ENCODE measurements at regions of chr19 and their contacts with region 1.

Region 1: GRCh38 chr19:39110263-39110967 is 15.2 kb upstream of the PAK4 start:
- H3K4me3 ChIP-seq: no peak overlapping the region
- H3K27ac ChIP-seq: no peak overlapping the region
- H3K4me1 ChIP-seq: peaks cover 7% of the 10 kb centered on the region; the same call in 1 of the 2 replicates
- CTCF ChIP-seq: peak; percentile 97

Region 2: DNA sequence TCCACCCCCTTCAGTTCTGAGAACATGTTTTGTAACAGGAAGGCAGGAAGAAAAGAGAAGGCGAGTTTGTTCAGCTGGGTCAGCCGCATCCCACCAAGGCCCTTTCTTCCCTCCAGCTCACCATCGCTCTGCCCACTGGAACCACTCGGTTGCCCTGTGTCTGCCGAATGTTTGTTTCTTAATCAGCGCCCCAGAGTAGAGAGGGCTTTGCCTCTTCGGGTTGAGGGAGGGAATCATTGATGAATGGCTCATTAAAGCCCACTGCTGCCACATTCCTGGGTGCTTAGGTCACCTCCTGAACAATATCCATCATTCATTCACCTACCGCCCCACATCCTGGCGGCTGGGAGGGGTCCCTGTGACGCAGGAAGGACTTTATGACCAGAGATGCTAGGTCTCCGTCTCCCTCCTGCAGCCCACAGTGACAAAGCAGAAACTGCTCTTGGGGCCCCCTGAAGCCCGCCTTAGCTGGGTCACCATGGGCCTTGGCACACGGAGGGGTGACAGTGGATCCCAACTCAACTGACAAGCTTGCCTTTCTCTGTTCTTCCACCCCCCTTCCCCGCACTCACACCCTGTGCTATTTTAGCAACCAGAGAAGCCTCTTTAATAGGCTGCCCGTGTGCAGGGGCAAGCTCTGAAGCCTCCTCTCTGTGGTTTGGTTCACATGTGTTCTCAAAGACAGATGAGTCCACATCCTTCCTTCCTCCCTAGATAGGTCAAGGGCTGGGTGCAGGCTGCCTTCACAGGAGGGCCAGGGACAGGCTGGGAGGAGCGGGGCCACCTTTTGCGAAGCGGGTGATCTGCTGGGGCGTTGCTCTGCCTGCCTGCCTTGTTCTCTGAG is 416.8 kb before region 1 on chr19:
- CTCF ChIA-PET with region 1: no interaction called
- POLR2A ChIA-PET with region 1: no interaction called
- H3K4me3 ChIP-seq: no peak overlapping the region
- H3K27ac ChIP-seq: no peak overlapping the region
- H3K4me1 ChIP-seq: peaks cover 6% of the 10 kb centered on the region; the same call in 1 of the 2 replicates
- CTCF ChIP-seq: no peak

Region 3: GRCh38 chr19:39052243-39052746 is 58.1 kb before region 1 on chr19:
- CTCF ChIA-PET with region 1: interaction called, 40 read pairs
- POLR2A ChIA-PET with region 1: no interaction called
- H3K4me3 ChIP-seq: no peak overlapping the region
- H3K27ac ChIP-seq: no peak overlapping the region
- H3K4me1 ChIP-seq: no peaks in the 10 kb centered on the region
- CTCF ChIP-seq: peak; percentile 98

Region 4: DNA sequence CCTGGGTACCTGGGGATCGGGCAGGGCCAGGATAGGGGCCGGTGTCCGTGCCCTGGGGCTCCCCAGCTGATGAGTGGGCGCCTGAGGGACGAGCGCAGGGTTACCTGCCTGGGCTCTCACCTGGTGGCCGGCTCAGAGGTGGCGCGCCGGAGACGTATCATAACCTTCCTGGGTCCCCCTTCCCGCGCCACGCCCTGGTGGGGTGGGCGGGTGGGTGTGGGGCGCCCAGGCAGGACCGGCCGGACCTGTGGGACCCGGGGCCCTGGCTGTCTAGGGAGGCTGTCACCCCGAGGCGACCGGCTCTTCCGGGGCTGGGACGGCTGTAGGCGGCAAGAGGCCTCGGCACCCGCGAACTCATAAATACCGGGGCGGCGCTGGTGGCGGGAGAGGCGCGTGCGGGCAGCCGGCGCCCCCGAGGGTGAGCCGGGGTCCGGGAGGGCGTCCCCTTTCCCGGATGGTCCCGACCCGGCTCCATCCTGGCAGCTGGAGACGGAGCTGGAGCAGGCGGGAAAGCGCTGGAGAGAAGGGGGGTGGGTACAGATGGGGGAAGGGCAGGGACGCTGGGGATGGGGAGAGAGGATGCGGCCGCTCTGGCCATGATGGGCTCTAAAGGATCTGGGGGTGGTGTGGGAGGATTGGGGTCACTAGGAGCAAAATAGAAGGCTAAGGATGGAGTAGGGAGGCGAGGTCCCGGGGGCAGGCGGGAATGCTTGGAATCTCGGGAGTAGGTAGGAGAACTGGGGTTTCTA is 26.3 kb before region 1 on chr19 and contains the start of gene ACP7:
- CTCF ChIA-PET with region 1: interaction called, 20 read pairs
- POLR2A ChIA-PET with region 1: interaction called, 3 read pairs
- H3K4me3 ChIP-seq: no peak within 1 kb of the TSS
- H3K27ac ChIP-seq: no peak within 1 kb of the TSS
- H3K4me1 ChIP-seq: peaks cover 5% of the 10 kb centered on the region; the same call in 1 of the 2 replicates
- CTCF ChIP-seq: no peak

Region 5: DNA sequence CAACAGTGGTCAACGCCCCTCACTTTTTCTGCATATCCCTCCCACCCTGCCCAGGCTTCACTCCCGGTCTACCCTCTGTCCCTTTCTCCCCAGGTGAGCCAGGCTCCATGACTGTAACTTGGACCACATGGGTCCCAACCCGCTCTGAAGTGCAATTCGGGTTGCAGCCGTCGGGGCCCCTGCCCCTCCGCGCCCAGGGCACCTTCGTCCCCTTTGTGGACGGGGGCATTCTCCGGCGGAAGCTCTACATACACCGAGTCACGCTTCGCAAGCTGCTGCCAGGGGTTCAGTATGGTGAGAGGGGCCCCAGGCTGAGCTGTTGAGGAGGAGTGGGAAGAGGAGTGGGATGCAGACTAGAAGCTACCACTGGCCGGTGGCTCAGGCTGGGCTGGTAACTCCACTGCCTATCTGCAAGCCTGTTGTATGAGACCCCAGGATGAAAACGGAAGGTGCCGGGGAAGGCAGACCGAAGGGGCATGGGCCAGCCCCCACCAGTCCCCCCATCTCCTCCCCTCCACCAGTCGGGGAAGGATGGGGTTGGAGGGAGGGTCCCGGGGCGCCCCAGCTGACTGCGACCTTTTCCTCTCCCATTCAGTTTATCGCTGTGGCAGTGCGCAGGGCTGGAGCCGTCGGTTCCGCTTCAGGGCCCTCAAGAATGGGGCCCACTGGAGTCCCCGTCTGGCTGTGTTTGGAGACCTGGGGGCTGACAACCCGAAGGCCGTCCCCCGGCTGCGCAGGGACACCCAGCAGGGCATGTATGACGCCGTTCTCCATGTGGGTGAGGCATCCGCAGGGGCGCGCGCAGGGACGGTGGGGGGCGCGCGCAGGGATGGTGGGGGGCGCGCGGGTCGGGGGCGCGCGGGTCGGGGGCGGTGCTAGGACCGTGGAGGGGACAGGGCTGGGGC is 11.8 kb before region 1 on chr19:
- CTCF ChIA-PET with region 1: interaction called, 44 read pairs
- POLR2A ChIA-PET with region 1: no interaction called
- H3K4me3 ChIP-seq: no peak overlapping the region
- H3K27ac ChIP-seq: no peak overlapping the region
- H3K4me1 ChIP-seq: no peaks in the 10 kb centered on the region
- CTCF ChIP-seq: no peak

Region 6: GRCh38 chr19:39148939-39149529 is 38.6 kb after region 1 on chr19:
- CTCF ChIA-PET with region 1: no interaction called
- POLR2A ChIA-PET with region 1: no interaction called
- H3K4me3 ChIP-seq: no peak overlapping the region
- H3K27ac ChIP-seq: no peak overlapping the region
- H3K4me1 ChIP-seq: peaks cover 9% of the 10 kb centered on the region
- CTCF ChIP-seq: no peak

Region 7: DNA sequence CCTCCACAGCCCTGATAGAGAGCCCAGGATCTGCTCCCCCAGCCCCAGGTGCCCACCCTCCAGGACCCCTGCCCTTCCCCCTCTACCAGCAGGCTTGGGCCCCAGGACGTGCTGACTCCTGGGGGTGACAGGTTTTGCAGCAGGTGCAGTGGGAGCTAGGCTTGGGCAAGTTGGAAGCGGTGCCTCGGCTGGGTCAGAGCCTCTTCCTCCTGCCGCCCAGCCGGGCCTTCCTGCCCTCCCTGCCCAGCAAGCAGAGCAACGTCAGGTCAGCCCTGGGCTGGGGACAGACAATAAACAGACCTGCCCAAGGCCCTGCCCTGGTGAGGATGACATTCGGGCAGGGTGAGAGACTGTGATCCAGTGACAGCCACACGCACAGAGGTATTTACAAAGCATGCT is 77.1 kb after region 1 on chr19:
- CTCF ChIA-PET with region 1: interaction called, 36 read pairs
- POLR2A ChIA-PET with region 1: no interaction called
- H3K4me3 ChIP-seq: no peak overlapping the region
- H3K27ac ChIP-seq: 0 out of 2 replicates have a peak overlapping the region, but pooled peaks have one; percentile 24
- H3K4me1 ChIP-seq: 0 out of 2 replicates have a peak, but pooled peaks cover 4% of the 10 kb centered on the region
- CTCF ChIP-seq: no peak